ENCODE measurements at regions of chr3 and their contacts with region 1.

Region 1: GRCh38 chr3:68591389-68591788 is 341.0 kb downstream of the TAFA4 start:
- DNase-seq: no peak
- ATAC-seq: no peak

Region 2: DNA sequence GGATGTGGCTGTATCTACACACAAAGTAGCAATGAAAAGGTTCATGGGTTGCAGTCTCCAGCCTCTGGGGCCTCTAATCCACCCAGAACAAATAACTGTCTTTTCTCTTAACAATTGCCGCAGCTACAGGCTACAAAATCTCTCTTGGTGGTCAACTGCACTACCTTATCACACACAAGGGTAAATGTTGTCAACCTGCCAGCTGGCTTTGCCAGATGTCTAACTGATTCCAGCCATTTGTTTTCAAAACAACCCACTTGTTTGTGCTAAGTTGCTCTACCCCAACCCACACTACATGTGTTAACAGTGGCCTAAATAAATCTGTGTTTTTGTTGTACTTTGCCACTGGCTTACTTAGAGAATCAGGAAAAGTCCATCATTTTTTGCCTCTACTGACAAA is 106.3 kb before region 1 on chr3:
- intact Hi-C with region 1: no loop called
- DNase-seq: no peak
- ATAC-seq: no peak

Region 3: GRCh38 chr3:68535782-68536181 is 55.6 kb before region 1 on chr3:
- intact Hi-C with region 1: loop called (anchors 10 kb)
- DNase-seq: no peak
- ATAC-seq: no peak